Mammary epithelial cell (primary cell): ENCODE measurements at regions of chr21 and their contacts with region 1.

Region 1: GRCh38 chr21:27476696-27477095 is 509.8 kb upstream of the ADAMTS5 start:
- DNase-seq: no peak
- H3K4me3 ChIP-seq: no peak overlapping the region
- H3K27ac ChIP-seq: no peak overlapping the region
- H3K4me1 ChIP-seq: peaks cover 7% of the 10 kb centered on the region
- H3K27me3 ChIP-seq: peaks cover 5% of the 10 kb centered on the region
- CTCF ChIP-seq: peak; percentile 39 to 59

Region 2: DNA sequence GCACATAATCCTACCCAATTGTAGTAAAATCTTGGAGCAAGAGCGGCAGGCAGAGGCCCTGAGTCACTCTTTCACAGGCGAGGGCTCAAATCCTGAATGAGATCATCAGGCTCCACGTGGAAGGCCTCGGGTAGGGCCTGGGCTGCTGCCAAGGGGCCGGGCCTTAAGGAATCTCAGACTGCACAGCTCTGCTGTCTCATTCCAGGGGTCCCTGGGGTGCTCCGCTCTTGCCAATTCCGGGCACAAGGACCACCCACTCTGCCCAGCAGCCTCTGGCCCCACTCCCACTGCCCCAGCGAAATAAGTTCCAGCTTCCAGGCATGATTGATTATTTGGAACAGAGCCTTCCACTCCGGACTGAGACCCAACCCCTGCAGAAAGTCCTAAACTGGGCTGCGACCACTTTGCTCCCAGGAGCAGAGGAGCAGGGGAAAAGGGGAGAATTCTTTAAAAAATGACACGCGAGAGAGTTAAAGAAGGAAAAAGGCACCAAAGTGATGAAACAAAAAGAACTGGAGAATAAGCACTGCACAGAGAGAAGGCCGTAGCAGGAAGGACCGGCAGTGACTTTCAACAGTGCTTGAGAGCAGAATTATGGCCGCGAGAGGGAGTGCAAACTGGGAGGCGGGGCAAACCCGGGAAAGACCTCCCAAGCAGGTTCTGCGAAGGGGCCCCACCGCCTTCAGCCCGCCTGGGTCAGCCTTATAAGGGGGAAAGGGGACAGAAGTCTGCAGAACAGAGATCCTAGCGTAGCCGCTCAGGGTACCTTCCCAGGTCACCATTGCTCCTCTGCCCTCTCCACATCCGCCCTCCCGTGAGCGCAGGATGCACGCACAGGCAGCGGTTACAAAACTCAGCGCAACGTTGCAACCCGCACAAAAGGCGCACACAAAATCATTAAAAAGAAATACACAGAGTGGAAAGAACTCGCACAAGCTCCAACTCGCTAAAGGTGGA is 633.4 kb before region 1 on chr21:
- CTCF ChIA-PET with region 1: no interaction called
- dilution Hi-C with region 1: no loop called
- in situ Hi-C with region 1: no loop called
- intact Hi-C with region 1: loop called (anchors 10 kb)
- DNase-seq: peak; percentile 91
- H3K4me3 ChIP-seq: peak overlapping the region; percentile 70 to 85 (median 74)
- H3K27ac ChIP-seq: peak overlapping the region; percentile 80
- H3K4me1 ChIP-seq: peaks cover 27% of the 10 kb centered on the region
- H3K27me3 ChIP-seq: no peaks in the 10 kb centered on the region
- CTCF ChIP-seq: peak in 1 of 2 donors; percentile 29

Region 3: DNA sequence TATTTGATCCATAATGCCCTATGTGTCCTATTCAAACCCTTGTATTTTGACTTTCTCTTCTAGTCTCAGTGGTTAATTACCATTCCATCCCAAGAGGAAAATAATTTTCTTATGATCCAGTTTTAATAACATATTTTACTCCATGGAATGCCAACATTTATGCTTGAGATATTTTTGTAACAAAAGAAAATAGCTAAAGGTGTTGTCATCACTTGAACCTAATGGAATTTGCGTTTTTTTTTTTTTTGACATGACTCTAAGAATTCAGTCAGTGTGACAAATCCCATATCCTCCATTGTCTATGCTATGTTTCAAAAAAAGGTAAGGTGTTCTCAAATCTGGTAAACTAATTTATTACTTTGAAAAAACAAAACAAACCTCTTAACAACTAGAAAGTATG is 185.7 kb before region 1 on chr21:
- CTCF ChIA-PET with region 1: no interaction called
- dilution Hi-C with region 1: no loop called
- in situ Hi-C with region 1: no loop called
- intact Hi-C with region 1: no loop called
- DNase-seq: no peak
- H3K4me3 ChIP-seq: no peak overlapping the region
- H3K27ac ChIP-seq: no peak overlapping the region
- H3K4me1 ChIP-seq: no peaks in the 10 kb centered on the region
- H3K27me3 ChIP-seq: no peaks in the 10 kb centered on the region
- CTCF ChIP-seq: no peak

Region 4: DNA sequence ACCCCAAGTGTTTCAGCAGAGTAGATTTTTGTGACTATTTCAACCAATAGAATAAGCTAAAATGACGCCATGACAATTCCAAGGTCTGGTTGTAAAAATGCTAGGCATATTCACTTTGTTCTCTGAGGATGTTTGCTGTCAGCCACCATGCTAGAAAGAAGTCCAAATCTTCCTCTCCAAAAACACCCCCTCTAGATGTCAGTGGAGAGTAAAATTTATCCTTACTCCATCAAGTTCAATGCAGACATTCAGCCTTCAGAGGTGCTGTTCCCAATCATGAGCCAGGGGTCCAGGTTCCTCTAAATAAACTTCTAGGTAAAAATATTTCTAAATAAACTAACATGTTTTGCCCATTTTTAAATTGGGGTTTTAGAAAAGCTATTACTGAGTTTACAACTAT is 114.4 kb before region 1 on chr21:
- CTCF ChIA-PET with region 1: no interaction called
- dilution Hi-C with region 1: no loop called
- in situ Hi-C with region 1: no loop called
- intact Hi-C with region 1: loop called (anchors 10 kb)
- DNase-seq: peak; percentile 11
- H3K4me3 ChIP-seq: no peak overlapping the region
- H3K27ac ChIP-seq: no peak overlapping the region
- H3K4me1 ChIP-seq: peaks cover 9% of the 10 kb centered on the region
- H3K27me3 ChIP-seq: no peaks in the 10 kb centered on the region
- CTCF ChIP-seq: peak; percentile 30 to 44

Region 5: DNA sequence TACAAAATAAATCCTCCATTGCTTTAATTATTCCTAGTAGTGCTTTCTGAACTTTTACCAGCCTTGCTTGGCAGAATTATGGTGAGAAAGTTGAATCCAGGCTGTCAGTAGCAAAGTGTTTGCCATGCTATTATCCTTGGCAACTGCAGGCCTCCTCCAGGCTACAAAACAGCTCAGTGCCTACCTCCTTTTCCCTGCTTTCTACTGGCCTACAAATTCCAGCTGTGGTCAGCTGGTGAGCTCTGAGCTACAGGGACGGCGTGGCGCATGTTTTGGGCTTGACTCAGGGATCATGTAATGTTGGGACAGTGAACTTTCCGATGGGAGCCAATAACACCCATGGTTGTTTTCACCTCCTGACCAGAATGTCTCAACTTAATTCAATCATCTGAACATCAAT is 53.7 kb before region 1 on chr21:
- CTCF ChIA-PET with region 1: no interaction called
- dilution Hi-C with region 1: no loop called
- in situ Hi-C with region 1: no loop called
- intact Hi-C with region 1: loop called (anchors 10 kb)
- DNase-seq: peak; percentile 90
- H3K4me3 ChIP-seq: no peak overlapping the region
- H3K27ac ChIP-seq: peak overlapping the region; percentile 62
- H3K4me1 ChIP-seq: peaks cover 40% of the 10 kb centered on the region
- H3K27me3 ChIP-seq: no peaks in the 10 kb centered on the region
- CTCF ChIP-seq: no peak